ENCODE measurements at regions of chr15 and their contacts with region 1.

Region 1: DNA sequence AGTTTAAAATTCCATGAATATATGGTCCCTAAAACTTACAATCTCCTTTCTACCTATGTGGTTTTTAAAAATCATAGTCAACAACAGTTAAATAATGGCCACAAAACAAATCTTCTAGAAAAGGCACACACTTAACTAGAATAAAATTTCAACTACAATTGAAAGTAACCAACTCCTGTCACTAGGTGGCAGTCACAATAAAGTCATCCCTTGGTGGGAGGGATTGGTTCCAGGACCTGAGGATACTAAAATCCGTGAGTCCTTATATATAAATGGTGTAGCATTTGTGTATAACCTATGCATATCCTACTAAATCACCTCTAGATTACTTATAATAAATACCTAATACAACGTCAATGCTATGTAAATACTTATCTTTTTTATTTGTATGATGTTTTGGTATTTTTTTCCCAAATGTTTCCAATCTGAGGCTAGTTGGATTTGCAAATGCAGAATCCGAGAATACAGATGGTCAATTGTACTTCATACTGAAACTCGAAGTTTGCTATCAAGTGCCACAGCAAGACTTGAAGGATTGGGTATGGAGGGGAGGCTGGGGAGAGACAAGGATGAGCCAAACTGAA is 172.6 kb downstream of the FMN1 start:
- DNase-seq: peak; percentile 46
- H3K4me3 ChIP-seq: no peak overlapping the region
- H3K27ac ChIP-seq: no peak overlapping the region
- H3K4me1 ChIP-seq: no peaks in the 10 kb centered on the region
- H3K27me3 ChIP-seq: no peaks in the 10 kb centered on the region
- CTCF ChIP-seq: peak; percentile 42

Region 2: DNA sequence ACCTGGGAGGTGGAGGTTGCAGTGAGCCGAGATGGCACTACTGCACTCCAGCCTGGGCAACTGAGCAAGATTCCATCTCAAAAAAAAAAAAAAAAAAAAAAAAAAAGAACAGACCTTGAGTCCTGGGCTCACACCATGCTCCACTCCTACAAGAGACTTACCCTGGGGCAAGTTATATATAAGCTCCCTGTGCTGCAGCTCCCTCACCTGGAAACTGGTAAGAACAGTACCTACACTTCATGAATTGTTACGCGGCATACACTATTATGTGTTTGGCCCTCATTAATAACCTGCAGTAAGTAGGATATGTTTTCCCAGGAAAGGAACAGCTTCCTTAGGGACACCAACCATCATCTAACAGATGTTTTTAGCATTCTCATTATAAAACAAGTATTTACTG is 53.0 kb after region 1 on chr15:
- intact Hi-C with region 1: loop called (anchors 5 kb)
- DNase-seq: no peak
- H3K4me3 ChIP-seq: no peak overlapping the region
- H3K27ac ChIP-seq: no peak overlapping the region
- H3K4me1 ChIP-seq: no peaks in the 10 kb centered on the region
- H3K27me3 ChIP-seq: no peaks in the 10 kb centered on the region
- CTCF ChIP-seq: peak; percentile 31